Activated naive CD4-positive, alpha-beta T cell treated with anti-CD3 and anti-CD28 coated beads for 36 hours (primary cell): ENCODE measurements at regions of chr15 and their contacts with region 1.

Region 1: DNA sequence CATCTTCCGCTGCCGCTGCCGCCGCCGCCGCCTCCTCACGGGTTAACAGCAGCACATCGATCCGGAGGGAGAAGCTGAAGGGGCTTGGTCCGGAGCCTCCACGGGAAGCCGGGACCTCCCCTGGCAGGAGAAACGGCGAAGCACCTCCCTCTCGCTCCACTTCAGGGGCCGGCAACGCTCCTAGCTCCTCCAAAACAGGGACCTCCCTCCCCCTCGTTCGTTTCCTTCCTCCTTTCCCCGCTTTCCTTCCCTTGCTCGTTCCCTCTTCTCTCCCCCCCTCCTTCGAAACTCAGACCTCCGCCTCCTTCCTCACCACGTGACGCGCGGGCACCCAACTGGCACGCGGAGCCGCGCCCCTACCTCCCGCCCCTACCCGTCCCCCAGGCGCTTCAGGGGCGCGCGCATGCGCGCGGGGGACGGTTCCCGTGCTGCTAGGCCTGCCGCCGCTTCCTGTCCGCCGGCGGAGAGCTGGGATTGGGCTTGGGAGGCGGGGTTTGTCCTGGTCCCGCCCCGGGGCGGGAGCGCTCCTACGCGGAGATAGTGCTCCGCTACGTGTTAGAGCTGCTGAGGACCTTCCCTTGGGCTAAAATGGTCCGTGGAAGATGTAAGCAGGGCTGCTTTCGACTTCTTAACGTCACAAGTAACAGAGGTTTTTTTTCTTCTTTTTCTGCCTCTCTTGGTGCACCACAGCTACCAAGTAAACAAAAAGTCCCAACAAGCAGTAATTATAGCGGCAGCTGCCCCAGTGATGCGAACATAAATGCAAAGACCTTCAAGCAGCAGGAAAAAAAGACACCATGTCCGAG is at the start of gene ADAM10:
- DNase-seq: peak; percentile 98
- H3K4me3 Mint-ChIP-seq: peak within 1 kb of the TSS; percentile 94
- H3K27ac Mint-ChIP-seq: peak within 1 kb of the TSS; percentile 94
- H3K4me1 Mint-ChIP-seq: peaks cover 27% of the 10 kb centered on the region
- H3K27me3 Mint-ChIP-seq: no peaks in the 10 kb centered on the region
- total RNA-seq, gene ADAM10: 70.7 to 76.3 TPM

Region 2: GRCh38 chr15:58269455-58270414 is 480.0 kb before region 1 on chr15:
- CTCF ChIA-PET with region 1: no interaction called
- intact Hi-C with region 1: loop called (anchors 5 kb)
- DNase-seq: peak; percentile 56
- H3K4me3 Mint-ChIP-seq: no peak overlapping the region
- H3K27ac Mint-ChIP-seq: no peak overlapping the region
- H3K4me1 Mint-ChIP-seq: peaks cover 11% of the 10 kb centered on the region
- H3K27me3 Mint-ChIP-seq: no peaks in the 10 kb centered on the region

Region 3: GRCh38 chr15:58357521-58358476 is 391.9 kb before region 1 on chr15:
- CTCF ChIA-PET with region 1: no interaction called
- intact Hi-C with region 1: loop called (anchors 5 kb)
- DNase-seq: peak; percentile 86
- H3K4me3 Mint-ChIP-seq: peak overlapping the region; percentile 20
- H3K27ac Mint-ChIP-seq: peak overlapping the region; percentile 72
- H3K4me1 Mint-ChIP-seq: peaks cover 52% of the 10 kb centered on the region
- H3K27me3 Mint-ChIP-seq: no peaks in the 10 kb centered on the region

Region 4: GRCh38 chr15:58469432-58470353 is 280.0 kb before region 1 on chr15:
- CTCF ChIA-PET with region 1: no interaction called
- intact Hi-C with region 1: loop called (anchors 2 kb)
- DNase-seq: no peak
- H3K4me3 Mint-ChIP-seq: no peak overlapping the region
- H3K27ac Mint-ChIP-seq: no peak overlapping the region
- H3K4me1 Mint-ChIP-seq: peaks cover 42% of the 10 kb centered on the region
- H3K27me3 Mint-ChIP-seq: no peaks in the 10 kb centered on the region

Region 5: DNA sequence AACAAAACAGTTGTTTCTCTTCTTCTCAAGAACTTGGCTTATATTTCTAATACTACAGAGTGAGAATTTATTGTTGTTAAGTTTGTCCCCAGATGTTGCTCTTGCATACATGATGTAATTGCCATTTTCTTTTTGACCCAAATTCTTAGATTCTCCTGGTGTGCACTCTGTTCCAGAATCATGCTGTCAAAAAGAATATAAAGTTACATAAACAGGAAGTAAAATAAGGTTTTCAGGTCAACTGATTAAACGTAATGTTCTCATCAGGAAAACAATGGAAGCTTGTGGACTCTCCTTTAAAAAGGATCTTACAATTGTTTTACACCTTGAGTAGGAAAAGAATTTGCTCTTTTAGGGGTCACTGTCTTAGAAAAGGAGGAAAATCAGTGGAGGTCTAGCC is 122.0 kb before region 1 on chr15:
- CTCF ChIA-PET with region 1: interaction called, 3 read pairs
- intact Hi-C with region 1: loop called (anchors 2 kb)
- DNase-seq: no peak
- H3K4me3 Mint-ChIP-seq: no peak overlapping the region
- H3K27ac Mint-ChIP-seq: peak overlapping the region; percentile 88
- H3K4me1 Mint-ChIP-seq: peaks cover 38% of the 10 kb centered on the region
- H3K27me3 Mint-ChIP-seq: no peaks in the 10 kb centered on the region

Region 6: GRCh38 chr15:58738046-58738707 is 11.6 kb before region 1 on chr15:
- CTCF ChIA-PET with region 1: no interaction called
- intact Hi-C with region 1: loop called (anchors 1 kb)
- DNase-seq: no peak
- H3K4me3 Mint-ChIP-seq: peak overlapping the region; percentile 7
- H3K27ac Mint-ChIP-seq: peak overlapping the region; percentile 78
- H3K4me1 Mint-ChIP-seq: peaks cover 65% of the 10 kb centered on the region
- H3K27me3 Mint-ChIP-seq: no peaks in the 10 kb centered on the region

Region 7: GRCh38 chr15:58933281-58934113 is 183.8 kb after region 1 on chr15 and contains the start of gene SLTM:
- CTCF ChIA-PET with region 1: no interaction called
- intact Hi-C with region 1: loop called (anchors 1 kb)
- DNase-seq: peak; percentile 92
- H3K4me3 Mint-ChIP-seq: peak within 1 kb of the TSS; percentile 93
- H3K27ac Mint-ChIP-seq: peak within 1 kb of the TSS; percentile 99
- H3K4me1 Mint-ChIP-seq: peaks cover 23% of the 10 kb centered on the region
- H3K27me3 Mint-ChIP-seq: no peaks in the 10 kb centered on the region
- total RNA-seq, gene SLTM: 52.0 to 56.0 TPM